BJ (cell line): ENCODE measurements at regions of chr18 and their contacts with region 1.

Region 1: DNA sequence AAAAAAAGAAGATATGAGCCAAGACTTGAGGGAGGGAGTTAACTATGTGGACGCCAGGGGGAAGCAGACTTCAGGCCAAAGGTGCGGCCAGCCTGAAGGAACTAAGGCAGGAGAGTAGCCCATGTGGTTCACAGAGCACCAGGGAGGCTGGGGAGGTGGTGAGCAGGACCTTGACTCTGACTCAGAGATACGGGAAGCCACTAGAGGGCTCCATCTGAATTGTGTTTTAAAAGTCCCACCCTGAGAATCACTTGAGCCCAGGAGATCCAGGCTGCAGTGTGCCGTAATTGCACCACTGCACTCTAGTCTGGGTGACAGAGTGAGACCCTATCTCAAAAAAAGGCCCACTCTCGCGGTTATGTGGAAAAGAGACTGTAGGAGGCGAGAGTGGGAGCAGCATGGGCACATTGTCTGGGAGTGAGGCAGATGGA is 12.3 kb downstream of the CEP192 start:
- DNase-seq: peak; percentile 47
- H3K4me3 ChIP-seq: no peak overlapping the region
- H3K27me3 ChIP-seq: no peaks in the 10 kb centered on the region
- CTCF ChIP-seq: peak; percentile 71

Region 2: DNA sequence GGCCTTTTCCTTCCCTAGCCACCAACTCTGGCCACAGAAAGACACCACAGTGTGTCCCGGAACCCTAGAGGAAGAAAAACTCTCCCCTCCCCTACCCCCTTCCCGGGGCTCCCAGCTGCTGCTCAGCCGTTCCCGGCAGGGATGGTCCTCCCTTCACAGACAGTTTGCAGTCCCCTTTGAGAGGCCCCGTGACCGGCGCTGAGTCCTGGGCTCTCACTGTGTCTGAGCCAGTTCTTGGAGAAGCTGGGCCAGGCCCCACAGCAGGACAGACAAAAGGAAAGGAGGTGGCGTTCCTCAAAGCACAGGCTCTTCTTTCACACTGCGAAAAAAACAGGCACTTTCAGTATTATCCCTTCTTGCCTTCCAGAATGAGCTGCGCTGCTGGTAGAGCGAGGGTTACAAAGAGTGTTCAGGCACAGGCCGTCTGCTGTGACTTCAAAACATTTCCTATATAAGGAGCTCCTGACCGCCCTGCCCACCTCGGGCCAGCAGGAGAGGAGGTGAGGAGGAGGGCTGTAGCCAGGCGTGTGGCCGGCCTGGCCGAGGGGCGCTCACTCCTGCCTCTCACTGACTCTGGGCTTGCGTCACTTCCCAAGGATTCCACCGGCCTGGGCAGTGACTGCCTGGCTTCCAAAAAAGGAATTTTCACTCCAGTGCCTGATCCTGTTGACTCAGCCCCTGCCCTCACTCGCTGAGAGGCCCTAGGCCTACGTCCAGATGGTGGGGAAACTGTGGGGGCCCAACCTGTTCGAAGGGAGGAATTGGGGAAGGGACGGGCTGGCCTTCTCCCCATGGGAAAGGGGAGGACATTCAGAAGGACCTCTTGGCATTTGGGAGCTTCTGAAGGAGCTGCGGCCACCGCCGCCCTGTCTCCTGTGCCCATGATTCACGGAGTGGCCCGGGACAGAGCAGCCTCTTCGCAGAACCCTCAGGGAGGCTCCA is 724.5 kb before region 1 on chr18:
- CTCF ChIA-PET with region 1: no interaction called
- POLR2A ChIA-PET with region 1: interaction called, 18 read pairs
- DNase-seq: peak; percentile 83
- H3K4me3 ChIP-seq: peak overlapping the region; percentile 42
- H3K27me3 ChIP-seq: no peaks in the 10 kb centered on the region
- CTCF ChIP-seq: no peak

Region 3: GRCh38 chr18:12791610-12792009 is 211.9 kb before region 1 on chr18:
- CTCF ChIA-PET with region 1: no interaction called
- POLR2A ChIA-PET with region 1: no interaction called
- DNase-seq: no peak
- H3K4me3 ChIP-seq: no peak overlapping the region
- H3K27me3 ChIP-seq: no peaks in the 10 kb centered on the region
- CTCF ChIP-seq: no peak

Region 4: GRCh38 chr18:13014232-13014631 is 10.8 kb after region 1 on chr18:
- CTCF ChIA-PET with region 1: interaction called, 13 read pairs
- POLR2A ChIA-PET with region 1: no interaction called
- DNase-seq: no peak
- H3K4me3 ChIP-seq: no peak overlapping the region
- H3K27me3 ChIP-seq: no peaks in the 10 kb centered on the region
- CTCF ChIP-seq: no peak

Region 5: GRCh38 chr18:13086906-13087305 is 83.4 kb after region 1 on chr18:
- CTCF ChIA-PET with region 1: no interaction called
- POLR2A ChIA-PET with region 1: no interaction called
- DNase-seq: no peak
- H3K4me3 ChIP-seq: no peak overlapping the region
- H3K27me3 ChIP-seq: no peaks in the 10 kb centered on the region
- CTCF ChIP-seq: no peak

Region 6: GRCh38 chr18:13159579-13159978 is 156.1 kb after region 1 on chr18:
- CTCF ChIA-PET with region 1: interaction called, 18 read pairs
- POLR2A ChIA-PET with region 1: no interaction called
- DNase-seq: no peak
- H3K4me3 ChIP-seq: no peak overlapping the region
- H3K27me3 ChIP-seq: no peaks in the 10 kb centered on the region; the same call in none of the 2 replicates
- CTCF ChIP-seq: peak; percentile 84

Region 7: GRCh38 chr18:13202585-13202984 is 199.1 kb after region 1 on chr18:
- CTCF ChIA-PET with region 1: no interaction called
- POLR2A ChIA-PET with region 1: no interaction called
- DNase-seq: no peak
- H3K4me3 ChIP-seq: no peak overlapping the region
- H3K27me3 ChIP-seq: peaks cover under 1% of the 10 kb centered on the region; the same call in 1 of the 2 replicates
- CTCF ChIP-seq: no peak

Region 8: GRCh38 chr18:13338318-13338717 is 334.8 kb after region 1 on chr18:
- CTCF ChIA-PET with region 1: no interaction called
- POLR2A ChIA-PET with region 1: no interaction called
- DNase-seq: no peak
- H3K4me3 ChIP-seq: no peak overlapping the region
- H3K27me3 ChIP-seq: no peaks in the 10 kb centered on the region
- CTCF ChIP-seq: no peak